ENCODE measurements at regions of chr17 and their contacts with region 1.

Region 1: GRCh38 chr17:68777243-68777855 is 176.2 kb upstream of the FAM20A start:
- DNase-seq: peak; percentile 37
- ATAC-seq: peak; percentile 27
- H3K4me3 Mint-ChIP-seq: no peak overlapping the region
- H3K27ac Mint-ChIP-seq: no peak overlapping the region
- H3K4me1 Mint-ChIP-seq: no peaks in the 10 kb centered on the region
- H3K27me3 Mint-ChIP-seq: peaks cover 3% of the 10 kb centered on the region
- CTCF ChIP-seq: peak; percentile 68

Region 2: DNA sequence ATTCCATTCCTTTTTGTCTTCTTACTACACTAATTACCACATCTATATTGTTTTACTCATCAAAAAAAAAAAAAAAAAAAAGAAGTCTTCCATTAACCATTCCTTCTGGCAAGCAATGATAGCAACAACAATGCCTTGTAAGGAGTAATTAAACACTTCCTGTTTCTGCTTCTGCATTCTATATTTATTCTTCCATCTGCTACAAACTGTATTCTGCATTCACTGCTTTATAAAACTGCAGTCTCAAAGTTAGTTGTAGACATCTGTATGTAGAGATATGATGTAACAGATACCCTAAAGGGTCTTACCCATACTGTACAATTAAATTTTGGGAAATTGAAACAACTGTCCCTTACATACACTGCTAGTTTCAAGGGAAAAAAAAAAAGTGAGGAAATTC is 393.0 kb after region 1 on chr17:
- CTCF ChIA-PET with region 1: no interaction called
- POLR2A ChIA-PET with region 1: no interaction called
- intact Hi-C with region 1: no loop called
- DNase-seq: no peak
- ATAC-seq: no peak
- H3K4me3 Mint-ChIP-seq: no peak overlapping the region
- H3K27ac Mint-ChIP-seq: no peak overlapping the region
- H3K4me1 Mint-ChIP-seq: no peaks in the 10 kb centered on the region
- H3K27me3 Mint-ChIP-seq: no peaks in the 10 kb centered on the region
- CTCF ChIP-seq: no peak

Region 3: GRCh38 chr17:69235338-69235930 is 458.1 kb after region 1 on chr17:
- CTCF ChIA-PET with region 1: interaction called, 7 read pairs
- POLR2A ChIA-PET with region 1: no interaction called
- intact Hi-C with region 1: loop called (anchors 2 kb)
- DNase-seq: peak; percentile 84
- ATAC-seq: peak; percentile 76
- H3K4me3 Mint-ChIP-seq: no peak overlapping the region
- H3K27ac Mint-ChIP-seq: no peak overlapping the region
- H3K4me1 Mint-ChIP-seq: no peaks in the 10 kb centered on the region
- H3K27me3 Mint-ChIP-seq: no peaks in the 10 kb centered on the region
- CTCF ChIP-seq: peak; percentile 80

Region 4: DNA sequence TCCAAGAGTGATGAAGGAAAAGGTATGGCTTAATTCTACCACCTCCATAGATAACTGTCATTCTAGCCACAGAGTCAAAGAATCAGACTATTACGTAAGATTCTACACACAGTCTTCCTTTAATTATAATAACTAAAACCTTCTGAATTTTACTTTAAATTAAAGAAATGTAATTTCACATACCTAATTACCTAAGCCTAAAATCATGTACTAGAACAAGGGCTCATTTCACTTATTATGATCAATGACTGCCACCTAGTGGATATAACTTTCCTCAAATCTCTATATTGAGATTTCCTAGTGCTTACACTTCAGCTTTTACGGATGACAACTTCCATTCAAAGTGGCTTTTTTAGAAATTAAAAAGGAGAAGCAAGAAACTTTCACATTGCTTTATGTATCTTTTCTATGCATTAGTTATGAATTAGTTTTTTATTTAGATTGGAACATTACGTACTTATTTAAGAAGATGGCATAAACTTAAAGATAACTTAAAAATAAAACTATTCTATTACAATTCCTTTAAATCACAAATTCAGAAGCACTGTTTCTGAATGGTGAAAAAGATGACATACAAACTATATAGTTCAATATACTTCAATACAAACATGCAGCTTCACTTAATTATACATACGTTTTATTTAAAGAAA is 469.5 kb after region 1 on chr17:
- CTCF ChIA-PET with region 1: interaction called, 32 read pairs
- POLR2A ChIA-PET with region 1: no interaction called
- intact Hi-C with region 1: no loop called
- DNase-seq: no peak
- ATAC-seq: peak; percentile 42
- H3K4me3 Mint-ChIP-seq: no peak overlapping the region
- H3K27ac Mint-ChIP-seq: no peak overlapping the region
- H3K4me1 Mint-ChIP-seq: no peaks in the 10 kb centered on the region
- H3K27me3 Mint-ChIP-seq: no peaks in the 10 kb centered on the region
- CTCF ChIP-seq: peak; percentile 75